Activated CD8-positive, alpha-beta T cell treated with anti-CD3 and anti-CD28 coated beads for 36 hours (primary cell): ENCODE measurements at regions of chr1 and their contacts with region 1.

Region 1: GRCh38 chr1:247165674-247166073 is 6.1 kb downstream of the ZNF124 start:
- DNase-seq: no peak
- ATAC-seq: no peak
- H3K4me3 Mint-ChIP-seq: no peak overlapping the region
- H3K27ac Mint-ChIP-seq: no peak overlapping the region
- H3K4me1 Mint-ChIP-seq: peaks cover 44% of the 10 kb centered on the region
- H3K27me3 Mint-ChIP-seq: no peaks in the 10 kb centered on the region
- CTCF ChIP-seq: no peak

Region 2: DNA sequence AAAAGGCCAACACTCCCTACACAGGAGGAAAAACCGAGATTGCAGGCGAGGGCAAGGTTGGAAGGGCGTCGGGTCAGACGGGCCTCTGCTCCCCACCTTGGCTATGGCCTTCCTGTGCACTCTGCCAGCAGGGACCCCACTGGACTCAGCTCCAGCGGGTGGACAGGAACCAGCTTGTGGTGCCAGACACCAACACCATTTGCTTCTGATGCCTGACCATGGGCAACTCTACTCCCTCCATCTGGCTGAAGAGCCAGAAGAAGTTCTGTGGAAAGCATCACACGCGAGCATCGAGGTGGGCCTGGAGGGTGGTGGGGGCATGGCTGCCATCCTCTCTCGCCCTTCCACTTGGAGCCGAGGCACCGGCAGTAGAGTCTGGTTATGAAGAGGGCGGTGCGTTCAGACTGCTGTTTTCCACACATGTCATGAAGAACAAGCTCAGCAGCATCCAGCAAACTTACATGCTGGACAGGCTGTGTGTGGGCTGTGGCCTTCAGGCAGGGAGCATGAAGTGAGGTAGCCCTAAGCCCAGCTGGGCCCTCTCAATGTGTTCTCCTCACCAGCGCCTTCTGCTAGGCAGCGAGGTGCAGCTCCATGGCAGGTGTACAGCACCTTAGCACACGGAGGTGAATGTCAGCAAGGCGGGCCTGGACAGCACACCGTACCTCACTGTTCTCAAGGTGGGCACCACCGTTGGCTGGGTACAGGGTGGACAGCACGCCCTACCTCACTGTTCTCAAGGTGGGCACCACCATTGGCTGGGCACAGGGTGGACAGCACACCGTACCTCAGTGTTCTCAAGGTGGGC is 45.9 kb before region 1 on chr1:
- CTCF ChIA-PET with region 1: no interaction called
- POLR2A ChIA-PET with region 1: no interaction called
- intact Hi-C with region 1: loop called (anchors 5 kb)
- DNase-seq: no peak
- ATAC-seq: no peak
- H3K4me3 Mint-ChIP-seq: no peak overlapping the region
- H3K27ac Mint-ChIP-seq: no peak overlapping the region
- H3K4me1 Mint-ChIP-seq: no peaks in the 10 kb centered on the region
- H3K27me3 Mint-ChIP-seq: no peaks in the 10 kb centered on the region
- CTCF ChIP-seq: no peak

Region 3: GRCh38 chr1:247228133-247228532 is 62.5 kb after region 1 on chr1:
- CTCF ChIA-PET with region 1: no interaction called
- POLR2A ChIA-PET with region 1: no interaction called
- intact Hi-C with region 1: no loop called
- DNase-seq: no peak
- ATAC-seq: no peak
- H3K4me3 Mint-ChIP-seq: no peak overlapping the region
- H3K27ac Mint-ChIP-seq: no peak overlapping the region
- H3K4me1 Mint-ChIP-seq: no peaks in the 10 kb centered on the region
- H3K27me3 Mint-ChIP-seq: no peaks in the 10 kb centered on the region
- CTCF ChIP-seq: no peak